ENCODE measurements at regions of chr19 and their contacts with region 1.

Region 1: DNA sequence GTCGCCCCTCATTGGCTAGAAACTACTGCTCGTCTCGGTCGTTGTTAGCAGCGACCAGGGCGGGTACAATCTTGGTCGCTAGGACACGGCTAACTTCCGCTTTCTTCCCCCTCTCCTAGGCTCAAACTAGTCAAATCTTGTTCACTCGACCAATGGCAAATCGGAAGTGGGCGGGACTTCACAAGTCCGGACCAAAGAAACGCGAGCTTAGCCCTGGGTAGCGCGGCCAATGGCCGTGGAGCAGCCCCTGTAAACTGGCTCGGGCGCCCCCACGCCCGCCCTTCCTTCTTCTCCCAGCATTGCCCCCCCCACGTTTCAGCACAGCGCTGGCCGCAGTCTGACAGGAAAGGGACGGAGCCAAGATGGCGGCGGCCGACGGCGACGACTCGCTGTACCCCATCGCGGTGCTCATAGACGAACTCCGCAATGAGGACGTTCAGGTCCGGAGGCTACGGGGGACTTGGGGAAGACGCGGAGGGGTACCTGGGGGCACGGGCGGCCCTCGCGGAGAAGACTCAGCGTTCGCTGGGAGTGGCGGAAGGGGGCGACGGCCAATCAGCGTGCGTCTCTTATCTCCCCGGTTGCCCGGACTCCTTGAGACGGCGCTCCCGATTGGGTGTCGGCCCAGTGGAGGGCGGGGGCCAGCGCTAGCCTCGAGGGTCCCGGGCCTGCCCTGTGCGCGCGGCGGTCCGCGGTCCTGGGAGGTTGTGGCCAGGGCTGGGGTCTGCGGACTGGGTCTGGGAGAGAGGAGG is at the start of gene PPP2R1A:
- DNase-seq: peak; percentile 98
- ATAC-seq: peak; percentile 94
- H3K4me3 Mint-ChIP-seq: peak within 1 kb of the TSS; percentile 96
- H3K27ac Mint-ChIP-seq: peak within 1 kb of the TSS; percentile 99
- H3K4me1 Mint-ChIP-seq: peaks cover 38% of the 10 kb centered on the region
- H3K27me3 Mint-ChIP-seq: no peaks in the 10 kb centered on the region; the same call in 1 of the 2 replicates
- CTCF ChIP-seq: no peak
- total RNA-seq, gene PPP2R1A: 505 to 507 TPM (median 506 TPM) in 3 replicates

Region 2: DNA sequence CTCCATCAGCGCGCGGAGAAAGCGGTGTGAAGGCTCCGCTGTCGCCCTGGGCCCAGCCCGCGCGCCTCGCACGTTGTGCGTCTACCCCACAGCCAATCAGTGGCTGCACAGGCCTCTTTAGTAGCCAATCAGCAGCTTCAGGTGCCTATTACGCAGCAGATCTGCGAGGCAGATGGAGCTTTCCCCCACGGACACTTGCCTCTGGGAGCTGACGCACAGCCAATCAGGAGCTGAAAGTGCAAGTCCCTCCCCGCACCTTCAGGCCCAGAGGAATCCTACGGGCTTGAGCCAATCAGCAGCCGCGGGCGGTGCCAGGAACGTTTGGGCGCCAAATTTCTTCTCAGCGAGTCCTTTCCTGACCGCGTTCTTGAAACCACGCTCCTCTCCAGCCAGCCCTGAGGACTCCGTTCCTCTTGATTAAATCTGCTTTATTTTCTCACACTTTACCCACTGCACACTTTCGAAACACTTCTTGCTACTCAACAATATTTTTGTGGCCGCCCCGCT is 1007.9 kb before region 1 on chr19:
- CTCF ChIA-PET with region 1: no interaction called
- POLR2A ChIA-PET with region 1: interaction called, 10 read pairs
- DNase-seq: peak; percentile 77
- ATAC-seq: peak; percentile 82
- H3K4me3 Mint-ChIP-seq: peak overlapping the region; percentile 68
- H3K27ac Mint-ChIP-seq: no peak overlapping the region
- H3K4me1 Mint-ChIP-seq: 0 out of 2 replicates have a peak, but pooled peaks cover 4% of the 10 kb centered on the region
- H3K27me3 Mint-ChIP-seq: peaks cover 55% of the 10 kb centered on the region
- CTCF ChIP-seq: no peak

Region 3: GRCh38 chr19:51887522-51888498 is 302.1 kb before region 1 on chr19 and contains the start of gene ZNF577:
- CTCF ChIA-PET with region 1: no interaction called
- POLR2A ChIA-PET with region 1: interaction called, 13 read pairs
- DNase-seq: peak; percentile 79
- ATAC-seq: peak; percentile 78
- H3K4me3 Mint-ChIP-seq: peak within 1 kb of the TSS; percentile 89
- H3K27ac Mint-ChIP-seq: peak within 1 kb of the TSS; percentile 98
- H3K4me1 Mint-ChIP-seq: peaks cover 5% of the 10 kb centered on the region
- H3K27me3 Mint-ChIP-seq: peaks cover 10% of the 10 kb centered on the region
- CTCF ChIP-seq: no peak
- total RNA-seq, gene ZNF577: 41.0 to 45.2 TPM (median 41.5 TPM) in 3 replicates

Region 4: GRCh38 chr19:52039169-52039568 is 150.7 kb before region 1 on chr19:
- CTCF ChIA-PET with region 1: no interaction called
- POLR2A ChIA-PET with region 1: no interaction called
- DNase-seq: no peak
- ATAC-seq: no peak
- H3K4me3 Mint-ChIP-seq: no peak overlapping the region
- H3K27ac Mint-ChIP-seq: no peak overlapping the region
- H3K4me1 Mint-ChIP-seq: peaks cover 4% of the 10 kb centered on the region; the same call in 1 of the 2 replicates
- H3K27me3 Mint-ChIP-seq: no peaks in the 10 kb centered on the region
- CTCF ChIP-seq: no peak

Region 5: DNA sequence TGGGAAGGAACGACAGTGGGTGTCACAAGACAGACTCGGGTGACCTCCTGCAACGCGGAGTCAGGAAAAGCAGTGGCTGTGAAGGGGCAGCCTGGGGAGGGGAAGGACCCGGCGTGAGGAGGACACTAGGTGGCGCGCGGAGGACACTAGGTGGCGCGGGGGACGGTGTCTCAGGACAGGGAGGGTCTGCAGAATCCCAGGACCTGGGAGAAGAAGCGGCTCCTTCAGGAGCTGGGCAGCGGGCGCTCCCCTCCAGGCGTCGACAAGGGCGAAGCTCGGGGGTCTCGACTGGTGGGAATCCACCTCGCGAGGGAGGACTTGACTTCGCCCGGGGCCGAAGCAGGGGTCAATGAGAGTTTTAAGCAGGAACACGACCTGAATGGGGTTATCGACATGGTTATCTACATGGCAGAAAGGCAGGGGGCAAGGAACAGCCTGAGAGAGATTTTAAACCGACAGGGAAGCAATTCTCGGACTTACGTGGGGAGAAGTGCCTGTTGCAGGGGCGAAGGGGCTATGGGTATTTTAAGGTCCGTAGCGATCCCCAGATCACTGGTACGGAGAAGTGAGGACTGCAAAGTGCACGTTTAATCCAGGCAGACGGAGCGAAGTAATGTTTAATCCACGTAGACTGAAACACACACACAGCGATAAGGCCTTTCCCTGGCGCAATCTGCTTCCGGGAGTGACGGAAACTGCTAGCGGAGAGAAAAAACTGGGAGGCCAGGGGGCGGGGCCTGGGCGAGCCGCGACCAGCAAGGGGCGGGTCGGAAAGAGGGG is 50.5 kb before region 1 on chr19 and contains the start of gene ZNF616:
- CTCF ChIA-PET with region 1: interaction called, 20 read pairs
- POLR2A ChIA-PET with region 1: interaction called, 21 read pairs
- DNase-seq: peak; percentile 99
- ATAC-seq: peak; percentile 83
- H3K4me3 Mint-ChIP-seq: peak within 1 kb of the TSS; percentile 97
- H3K27ac Mint-ChIP-seq: peak within 1 kb of the TSS; percentile 97
- H3K4me1 Mint-ChIP-seq: peaks cover 24% of the 10 kb centered on the region
- H3K27me3 Mint-ChIP-seq: no peaks in the 10 kb centered on the region; the same call in 1 of the 2 replicates
- CTCF ChIP-seq: peak; percentile 49; the same call in 1 of the 2 replicates
- total RNA-seq, gene ZNF616: 27.2 to 34.6 TPM (median 28.8 TPM) in 3 replicates

Region 6: DNA sequence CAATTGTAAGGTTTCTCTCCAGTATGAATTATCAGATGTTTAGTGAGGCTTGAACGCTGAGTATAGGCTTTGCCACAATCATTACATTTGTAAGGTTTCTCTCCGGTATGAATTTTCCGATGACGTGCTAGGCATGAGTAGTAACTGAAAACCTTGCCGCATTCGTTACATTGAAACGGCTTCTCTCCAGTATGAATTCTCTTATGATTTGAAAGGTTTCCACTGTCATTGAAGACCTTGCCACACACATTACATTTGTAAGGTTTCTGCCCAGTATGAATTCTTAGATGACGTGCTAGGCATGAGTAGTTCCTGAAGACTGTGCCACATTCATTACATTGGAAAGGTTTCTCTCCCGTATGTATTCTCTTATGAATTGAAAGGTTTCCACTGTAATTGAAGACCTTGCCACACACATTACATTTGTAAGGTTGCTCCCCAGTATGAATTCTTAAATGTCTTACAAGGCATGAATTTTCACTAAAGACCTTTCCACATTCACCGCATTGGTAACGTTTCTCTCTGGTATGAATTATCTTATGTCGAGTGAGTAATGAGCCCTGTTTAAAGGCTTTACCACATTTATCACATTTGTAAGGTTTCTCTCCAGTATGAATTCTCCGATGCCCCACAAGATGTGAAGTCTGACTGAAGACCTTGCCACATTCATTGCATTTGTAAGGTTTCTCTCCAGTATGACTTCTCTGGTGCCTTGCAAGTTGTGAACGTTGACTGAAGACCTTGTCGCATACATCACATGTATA is 34.1 kb before region 1 on chr19:
- CTCF ChIA-PET with region 1: no interaction called
- POLR2A ChIA-PET with region 1: no interaction called
- DNase-seq: no peak
- ATAC-seq: no peak
- H3K4me3 Mint-ChIP-seq: no peak overlapping the region
- H3K27ac Mint-ChIP-seq: no peak overlapping the region
- H3K4me1 Mint-ChIP-seq: no peaks in the 10 kb centered on the region
- H3K27me3 Mint-ChIP-seq: peaks cover 19% of the 10 kb centered on the region
- CTCF ChIP-seq: no peak

Region 7: DNA sequence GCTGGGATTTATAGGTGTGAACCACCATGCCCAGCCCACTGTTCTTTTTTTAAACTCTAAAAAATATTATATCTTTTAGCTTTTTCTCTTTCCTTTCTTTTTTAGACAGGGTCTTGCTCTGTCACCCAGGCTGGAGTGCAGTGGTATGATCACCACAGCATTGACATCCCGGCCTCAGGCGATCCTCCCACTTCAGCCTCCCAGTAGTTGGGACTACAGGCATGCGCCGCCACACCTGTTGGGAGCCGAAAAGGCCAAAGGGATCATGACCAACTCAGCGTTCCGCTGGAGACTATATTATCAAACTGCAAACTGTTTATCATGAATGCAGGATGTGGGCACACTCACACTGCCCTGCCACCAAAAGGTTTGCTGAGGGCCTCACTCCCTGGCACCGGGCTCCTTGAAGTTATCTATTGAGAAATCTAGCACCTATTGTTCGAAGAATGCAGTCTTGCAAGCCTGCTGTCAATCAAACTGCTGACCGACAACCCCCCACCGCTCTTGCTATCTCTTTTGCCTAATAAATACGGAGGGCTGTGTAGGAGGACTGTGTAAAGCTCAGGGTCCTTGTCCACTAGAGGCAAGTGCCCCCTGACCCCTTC is 13.4 kb before region 1 on chr19:
- CTCF ChIA-PET with region 1: interaction called, 5 read pairs
- POLR2A ChIA-PET with region 1: interaction called, 14 read pairs
- DNase-seq: no peak
- ATAC-seq: no peak
- H3K4me3 Mint-ChIP-seq: no peak overlapping the region
- H3K27ac Mint-ChIP-seq: no peak overlapping the region
- H3K4me1 Mint-ChIP-seq: peaks cover 20% of the 10 kb centered on the region
- H3K27me3 Mint-ChIP-seq: no peaks in the 10 kb centered on the region
- CTCF ChIP-seq: no peak